Heart left ventricle (tissue), 16 donors: ENCODE measurements at regions of chr5 and their contacts with region 1.

Region 1: DNA sequence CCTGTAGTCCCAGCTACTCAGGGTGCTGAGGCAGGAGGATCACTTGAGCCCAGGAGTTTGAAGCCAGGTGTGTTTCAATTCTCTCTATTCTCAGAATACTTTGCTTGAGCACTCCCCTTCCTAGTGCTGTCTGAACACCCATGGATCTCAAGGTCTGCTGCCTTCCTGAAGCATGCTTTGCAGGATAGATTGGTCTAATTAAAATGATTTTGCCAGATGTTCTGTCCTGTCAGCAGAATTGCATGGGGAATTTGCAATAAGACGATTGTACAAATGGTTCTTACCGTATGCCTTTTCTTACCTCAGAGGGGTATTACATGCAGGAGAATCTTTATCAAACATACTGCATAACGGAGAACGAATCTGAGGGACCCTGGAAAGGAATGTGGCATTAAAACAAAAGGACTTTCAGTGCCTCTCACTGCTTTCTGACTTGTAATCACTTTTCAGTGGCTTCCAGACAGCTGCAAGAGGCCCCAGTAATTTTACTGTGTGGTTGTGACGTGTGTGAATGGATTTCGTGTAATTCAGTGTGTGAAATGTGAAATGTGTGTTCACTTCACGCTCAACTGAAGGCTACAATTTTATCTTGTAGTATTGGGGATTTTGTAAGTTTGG is 587.2 kb upstream of the SEMA6A start:
- DNase-seq: no peak
- ATAC-seq: no peak
- H3K4me3 ChIP-seq: no peak overlapping the region
- H3K27ac ChIP-seq: no peak overlapping the region
- H3K4me1 ChIP-seq: no peaks in the 10 kb centered on the region
- H3K27me3 ChIP-seq: no peaks in the 10 kb centered on the region
- CTCF ChIP-seq: no peak
- POLR2A ChIP-seq: no peak

Region 2: DNA sequence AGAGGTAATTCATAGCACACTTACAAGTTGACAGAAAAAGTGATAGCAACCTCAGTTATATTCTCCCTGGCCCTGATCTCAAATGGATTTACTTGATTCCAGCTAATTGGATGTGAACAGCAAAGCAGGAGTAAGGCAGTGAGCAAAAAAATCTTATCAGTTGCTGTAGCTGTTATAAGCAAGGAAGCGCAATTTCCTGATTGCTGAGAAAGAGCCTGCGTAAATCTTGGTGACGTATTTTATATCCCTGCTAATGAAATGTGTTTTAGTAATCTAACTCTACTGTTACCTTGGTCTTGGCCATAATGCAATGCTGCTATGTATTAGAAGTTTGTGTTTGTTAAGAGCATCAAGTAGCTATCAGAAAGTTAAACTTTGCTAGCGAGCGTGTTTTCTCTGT is 74.0 kb after region 1 on chr5:
- intact Hi-C with region 1: loop called in 1 of 10 experiments (anchors 10 kb)
- DNase-seq: no peak
- ATAC-seq: peak in 1 of 4 donors; percentile 94
- H3K4me3 ChIP-seq: no peak overlapping the region
- H3K27ac ChIP-seq: peak overlapping the region in 3 of 12 donors; percentile 39 to 59 (median 39)
- H3K4me1 ChIP-seq: peaks cover 0 to 3% (median 0%) of the 10 kb centered on the region in 12 donors
- H3K27me3 ChIP-seq: no peaks in the 10 kb centered on the region
- CTCF ChIP-seq: no peak
- POLR2A ChIP-seq: no peak